A673 (cell line): ENCODE measurements at regions of chr17 and their contacts with region 1.

Region 1: GRCh38 chr17:30554839-30555751 is 77.9 kb downstream of the GOSR1 start:
- DNase-seq: no peak
- H3K4me3 ChIP-seq: no peak overlapping the region
- H3K27ac ChIP-seq: no peak overlapping the region
- H3K4me1 ChIP-seq: no peaks in the 10 kb centered on the region
- H3K27me3 ChIP-seq: no peaks in the 10 kb centered on the region
- CTCF ChIP-seq: 0 out of 2 replicates have a peak, but pooled peaks have one; percentile 27

Region 2: GRCh38 chr17:30161601-30162000 is 393.5 kb before region 1 on chr17:
- CTCF ChIA-PET with region 1: interaction called, 10 read pairs
- POLR2A ChIA-PET with region 1: no interaction called
- intact Hi-C with region 1: no loop called
- DNase-seq: no peak
- H3K4me3 ChIP-seq: no peak overlapping the region
- H3K27ac ChIP-seq: no peak overlapping the region
- H3K4me1 ChIP-seq: peaks cover 23% of the 10 kb centered on the region
- H3K27me3 ChIP-seq: no peaks in the 10 kb centered on the region
- CTCF ChIP-seq: no peak

Region 3: GRCh38 chr17:30336369-30337171 is 218.5 kb before region 1 on chr17:
- CTCF ChIA-PET with region 1: no interaction called
- POLR2A ChIA-PET with region 1: no interaction called
- intact Hi-C with region 1: no loop called
- DNase-seq: peak; percentile 73
- H3K4me3 ChIP-seq: no peak overlapping the region
- H3K27ac ChIP-seq: no peak overlapping the region
- H3K4me1 ChIP-seq: peaks cover 16% of the 10 kb centered on the region
- H3K27me3 ChIP-seq: no peaks in the 10 kb centered on the region
- CTCF ChIP-seq: peak; percentile 85

Region 4: DNA sequence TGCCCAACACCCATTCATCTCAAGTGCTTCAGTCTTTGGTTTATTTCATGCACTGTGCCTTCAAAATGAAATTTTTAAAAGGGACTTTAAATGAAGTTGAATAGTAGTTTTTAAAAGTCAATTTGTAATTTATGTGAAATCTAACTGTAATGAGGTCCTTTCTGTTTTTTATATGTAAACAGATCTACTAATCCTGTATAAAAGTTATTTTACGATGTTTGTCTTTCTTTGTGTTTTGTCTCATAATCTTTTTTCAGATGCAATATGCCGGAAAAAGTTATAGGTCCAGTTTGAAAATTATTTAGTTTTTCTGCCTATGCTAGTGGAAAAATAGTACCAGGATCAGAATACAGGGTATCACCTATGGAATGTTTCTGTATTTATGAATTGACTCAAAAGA is 86.6 kb before region 1 on chr17:
- CTCF ChIA-PET with region 1: no interaction called
- POLR2A ChIA-PET with region 1: no interaction called
- intact Hi-C with region 1: no loop called
- DNase-seq: no peak
- H3K4me3 ChIP-seq: no peak overlapping the region
- H3K27ac ChIP-seq: no peak overlapping the region
- H3K4me1 ChIP-seq: no peaks in the 10 kb centered on the region
- H3K27me3 ChIP-seq: no peaks in the 10 kb centered on the region
- CTCF ChIP-seq: no peak

Region 5: DNA sequence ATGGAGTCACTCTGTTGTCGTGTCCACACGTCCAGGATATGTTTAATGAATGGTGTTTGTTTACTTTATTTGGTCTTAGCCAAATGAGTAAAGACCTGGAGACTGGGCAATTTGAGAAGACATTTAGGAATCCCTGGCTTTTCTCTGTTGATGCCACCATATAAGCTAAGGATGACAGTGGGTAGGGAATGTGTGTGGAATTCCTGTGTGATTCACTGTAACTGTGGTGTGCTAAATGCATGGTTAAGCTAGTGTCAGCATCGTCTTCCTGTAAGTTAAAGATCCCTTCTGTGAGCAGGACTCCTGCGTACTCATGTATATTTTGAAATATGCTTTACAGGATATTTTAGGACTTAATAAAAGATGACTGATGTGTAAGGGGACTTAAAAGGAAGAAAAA is 51.5 kb before region 1 on chr17:
- CTCF ChIA-PET with region 1: no interaction called
- POLR2A ChIA-PET with region 1: no interaction called
- intact Hi-C with region 1: loop called (anchors 10 kb)
- DNase-seq: no peak
- H3K4me3 ChIP-seq: no peak overlapping the region
- H3K27ac ChIP-seq: no peak overlapping the region
- H3K4me1 ChIP-seq: no peaks in the 10 kb centered on the region
- H3K27me3 ChIP-seq: no peaks in the 10 kb centered on the region
- CTCF ChIP-seq: no peak